Activated CD4-positive, alpha-beta T cell treated with anti-CD3 and anti-CD28 coated beads, Interleukin-2, amount 10 ng/mL, durations not matched to agents 24 days and 14 days (primary cell): ENCODE measurements at regions of chr11 and their contacts with region 1.

Region 1: DNA sequence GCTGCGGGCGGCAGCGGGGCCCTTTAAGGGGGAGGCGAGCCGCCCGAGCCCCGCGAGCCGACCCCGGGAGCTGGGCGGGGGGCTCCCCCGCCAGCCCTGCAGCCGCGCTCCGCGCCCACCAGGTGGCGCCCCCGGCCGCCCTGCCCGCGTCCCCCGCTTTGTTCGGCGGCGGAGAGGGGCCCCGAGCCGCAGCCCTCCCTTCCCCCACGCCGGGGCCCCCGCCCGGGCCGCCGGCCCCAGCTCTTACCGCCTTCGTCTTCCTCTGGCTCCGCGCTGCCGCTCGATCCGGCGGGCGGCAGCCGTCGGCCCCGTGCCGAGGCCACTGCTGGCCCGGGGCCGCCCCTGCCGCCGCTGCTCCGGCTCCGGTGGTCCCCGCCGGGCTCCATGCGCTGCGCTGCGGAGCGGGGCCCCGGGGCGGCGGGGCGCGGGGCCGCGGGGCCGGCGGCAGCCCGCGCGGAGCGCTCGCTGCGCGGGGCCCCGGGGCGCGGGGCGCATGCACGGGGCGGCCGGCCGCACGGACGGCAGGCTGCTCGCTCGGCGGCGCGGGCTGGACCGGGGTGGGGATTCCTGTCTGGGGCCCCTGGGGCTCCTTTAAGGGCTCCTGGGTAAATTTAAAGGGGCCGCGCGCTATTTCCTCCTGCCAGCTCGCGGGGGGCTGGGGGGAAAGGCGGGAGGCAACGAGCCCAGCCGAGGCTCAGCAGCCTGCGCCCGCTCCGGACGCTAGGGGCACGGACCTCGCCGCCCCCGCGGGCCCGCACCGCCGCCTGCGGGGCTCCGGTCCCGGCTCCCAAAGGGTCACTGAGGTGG is at the start of gene ZFTA:
- DNase-seq: peak; percentile 89
- H3K4me3 Mint-ChIP-seq: peak within 1 kb of the TSS; percentile 96
- H3K27ac Mint-ChIP-seq: peak within 1 kb of the TSS; percentile 88
- H3K4me1 Mint-ChIP-seq: peaks cover 12% of the 10 kb centered on the region
- H3K27me3 Mint-ChIP-seq: peaks cover 34% of the 10 kb centered on the region
- total RNA-seq, gene ZFTA: 3.8 and 5.3 TPM in 2 replicates

Region 2: DNA sequence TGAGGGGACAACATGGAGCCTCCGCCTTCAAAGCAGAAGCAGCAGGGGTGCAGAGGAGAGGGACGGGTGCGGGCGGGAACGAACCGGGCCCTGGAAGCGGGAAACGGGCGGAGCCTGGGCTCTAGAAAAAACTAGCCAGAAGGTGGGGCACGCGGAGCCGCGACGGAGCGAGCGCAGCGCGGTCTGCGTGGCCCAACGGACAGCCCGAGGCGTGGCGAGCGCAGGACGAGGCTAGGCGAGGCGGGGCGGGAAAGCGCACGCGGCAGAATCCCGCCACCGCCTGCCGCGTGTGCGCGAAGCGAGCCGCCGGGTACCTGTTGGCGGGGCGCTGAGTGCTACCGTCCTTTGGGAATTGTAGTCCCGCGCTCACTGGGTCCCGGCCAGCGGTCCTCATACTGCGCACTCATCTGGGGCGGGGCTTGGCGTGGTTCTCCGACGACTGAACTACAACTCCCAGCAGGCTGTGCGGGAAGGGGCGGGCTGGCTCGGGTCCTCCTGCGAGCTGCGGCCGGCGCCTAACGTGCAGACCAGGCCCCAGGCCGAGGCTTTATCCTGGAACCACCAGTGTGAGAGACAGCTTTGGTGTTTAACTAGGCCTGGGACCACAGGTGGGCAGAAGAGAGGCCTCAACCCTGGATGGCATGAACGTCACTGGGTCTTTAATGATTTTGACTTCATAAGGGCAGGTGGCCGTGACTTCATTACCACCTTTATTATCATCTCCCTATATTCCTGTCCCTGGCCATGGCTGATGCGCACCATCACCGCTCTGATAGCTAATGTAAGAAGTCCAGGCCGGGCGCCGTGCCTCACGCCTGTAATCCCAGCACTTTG is 96.9 kb before region 1 on chr11 and contains the start of gene ATL3:
- intact Hi-C with region 1: no loop called
- DNase-seq: peak; percentile 98
- H3K4me3 Mint-ChIP-seq: peak within 1 kb of the TSS; percentile 82
- H3K27ac Mint-ChIP-seq: peak within 1 kb of the TSS; percentile 88
- H3K4me1 Mint-ChIP-seq: peaks cover 27% of the 10 kb centered on the region
- H3K27me3 Mint-ChIP-seq: no peaks in the 10 kb centered on the region
- total RNA-seq, gene ATL3: 38.5 and 39.5 TPM in 2 replicates

Region 3: GRCh38 chr11:63813035-63813562 is 44.7 kb after region 1 on chr11 and contains the start of gene SPINDOC:
- intact Hi-C with region 1: loop called (anchors 1 kb)
- DNase-seq: peak; percentile 95
- H3K4me3 Mint-ChIP-seq: peak within 1 kb of the TSS; percentile 86
- H3K27ac Mint-ChIP-seq: peak within 1 kb of the TSS; percentile 78
- H3K4me1 Mint-ChIP-seq: peaks cover 30% of the 10 kb centered on the region
- H3K27me3 Mint-ChIP-seq: peaks cover 3% of the 10 kb centered on the region
- total RNA-seq, gene SPINDOC: 60.2 and 65.8 TPM in 2 replicates

Region 4: GRCh38 chr11:63829823-63830489 is 61.5 kb after region 1 on chr11:
- intact Hi-C with region 1: no loop called
- DNase-seq: no peak
- H3K4me3 Mint-ChIP-seq: no peak overlapping the region
- H3K27ac Mint-ChIP-seq: no peak overlapping the region
- H3K4me1 Mint-ChIP-seq: no peaks in the 10 kb centered on the region
- H3K27me3 Mint-ChIP-seq: no peaks in the 10 kb centered on the region

Region 5: DNA sequence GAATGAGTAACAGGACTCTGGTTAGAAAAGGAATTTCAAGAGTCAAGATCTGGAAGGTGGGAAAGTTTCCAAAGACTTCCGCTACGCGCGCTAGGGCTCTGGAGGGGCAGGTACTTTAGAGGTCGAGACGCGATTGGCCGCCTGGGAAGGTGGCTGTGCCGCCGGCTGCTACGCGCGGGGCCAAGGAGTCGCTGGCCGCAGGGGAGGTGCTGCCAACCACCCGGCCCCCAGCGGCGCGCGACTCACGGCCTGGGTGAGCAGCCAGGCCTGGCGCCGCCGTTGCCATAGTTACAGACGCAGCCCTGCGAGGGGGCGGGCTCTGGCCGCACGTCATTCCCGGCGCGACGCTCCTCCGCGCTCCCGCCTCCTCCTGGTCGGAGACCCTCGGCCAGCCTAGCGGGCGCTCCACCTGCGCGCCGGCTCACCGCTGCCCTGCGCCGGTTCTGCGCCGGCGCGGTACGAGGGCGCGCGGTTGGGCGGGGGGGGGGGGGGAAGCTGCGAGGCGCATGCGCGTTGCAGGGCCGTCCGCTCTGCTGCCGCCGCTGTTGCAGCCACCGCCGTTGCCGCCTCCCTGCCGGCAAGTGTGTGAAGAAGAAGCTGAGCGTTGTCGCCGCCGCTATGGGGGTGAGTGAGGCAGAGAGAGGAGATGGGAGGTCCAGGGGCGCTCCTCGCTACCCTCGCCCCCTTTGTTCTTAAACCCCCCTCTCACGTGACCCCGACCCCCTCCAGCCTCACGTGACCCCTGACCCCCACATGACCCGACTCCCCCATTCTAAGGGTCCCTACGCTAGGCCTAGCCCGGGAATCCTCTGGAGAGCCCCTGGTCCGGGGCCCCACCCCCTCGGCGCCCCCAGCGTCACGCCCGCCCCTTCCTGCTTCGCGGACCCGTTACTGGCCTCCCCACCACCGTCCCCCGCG is 170.3 kb after region 1 on chr11 and contains the start of gene NAA40:
- intact Hi-C with region 1: loop called (anchors 2 kb)
- DNase-seq: peak; percentile 97
- H3K4me3 Mint-ChIP-seq: peak within 1 kb of the TSS; percentile 87
- H3K27ac Mint-ChIP-seq: peak within 1 kb of the TSS; percentile 80
- H3K4me1 Mint-ChIP-seq: peaks cover 17% of the 10 kb centered on the region
- H3K27me3 Mint-ChIP-seq: no peaks in the 10 kb centered on the region
- total RNA-seq, gene NAA40: 26.1 and 26.9 TPM in 2 replicates

Region 6: DNA sequence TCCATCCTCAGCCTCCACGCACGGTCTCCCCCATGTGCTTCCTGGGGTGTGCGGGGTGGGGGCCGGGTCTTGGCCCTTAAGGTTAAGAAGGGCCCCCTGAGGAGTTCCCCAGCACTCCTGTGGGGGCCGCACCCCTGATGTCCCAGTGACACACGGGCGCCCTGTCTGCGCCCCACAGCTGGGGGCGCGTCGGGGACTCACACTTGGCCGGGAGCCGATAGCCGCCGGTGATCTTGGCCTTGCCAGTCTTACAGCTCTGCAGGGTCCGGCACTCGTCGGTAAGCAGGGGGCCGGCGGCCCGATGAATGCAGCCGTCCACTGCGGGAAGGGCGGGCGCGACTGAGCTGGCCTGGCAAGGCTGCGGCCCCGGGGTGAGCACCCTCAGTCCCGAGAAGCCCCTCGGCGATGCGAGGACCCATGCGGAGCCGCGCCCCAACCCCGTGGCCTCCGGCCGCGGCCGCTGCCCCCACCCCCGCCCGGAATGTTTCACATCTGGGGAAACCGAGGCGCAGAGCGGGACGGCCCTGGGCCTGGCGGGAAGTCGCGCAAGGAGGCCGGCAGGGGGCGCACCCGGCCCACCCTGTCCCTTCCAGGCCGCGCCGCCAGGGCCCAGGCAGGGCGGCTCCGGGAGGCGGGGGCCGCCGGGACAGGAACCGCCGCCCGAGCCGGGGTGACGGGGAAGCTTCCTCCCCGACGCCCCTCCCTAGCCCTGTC is 231.7 kb after region 1 on chr11:
- intact Hi-C with region 1: loop called (anchors 5 kb)
- DNase-seq: peak; percentile 94
- H3K4me3 Mint-ChIP-seq: peak overlapping the region; percentile 39
- H3K27ac Mint-ChIP-seq: no peak overlapping the region
- H3K4me1 Mint-ChIP-seq: peaks cover 3% of the 10 kb centered on the region
- H3K27me3 Mint-ChIP-seq: peaks cover 1% of the 10 kb centered on the region

Region 7: GRCh38 chr11:64152841-64153691 is 384.6 kb after region 1 on chr11:
- intact Hi-C with region 1: loop called (anchors 2 kb)
- DNase-seq: peak; percentile 93
- H3K4me3 Mint-ChIP-seq: no peak overlapping the region
- H3K27ac Mint-ChIP-seq: no peak overlapping the region
- H3K4me1 Mint-ChIP-seq: peaks cover 7% of the 10 kb centered on the region
- H3K27me3 Mint-ChIP-seq: peaks cover 5% of the 10 kb centered on the region